Activated CD4-positive, alpha-beta T cell treated with anti-CD3 and anti-CD28 coated beads for 36 hours (primary cell): ENCODE measurements at regions of chrX and their contacts with region 1.

Region 1: DNA sequence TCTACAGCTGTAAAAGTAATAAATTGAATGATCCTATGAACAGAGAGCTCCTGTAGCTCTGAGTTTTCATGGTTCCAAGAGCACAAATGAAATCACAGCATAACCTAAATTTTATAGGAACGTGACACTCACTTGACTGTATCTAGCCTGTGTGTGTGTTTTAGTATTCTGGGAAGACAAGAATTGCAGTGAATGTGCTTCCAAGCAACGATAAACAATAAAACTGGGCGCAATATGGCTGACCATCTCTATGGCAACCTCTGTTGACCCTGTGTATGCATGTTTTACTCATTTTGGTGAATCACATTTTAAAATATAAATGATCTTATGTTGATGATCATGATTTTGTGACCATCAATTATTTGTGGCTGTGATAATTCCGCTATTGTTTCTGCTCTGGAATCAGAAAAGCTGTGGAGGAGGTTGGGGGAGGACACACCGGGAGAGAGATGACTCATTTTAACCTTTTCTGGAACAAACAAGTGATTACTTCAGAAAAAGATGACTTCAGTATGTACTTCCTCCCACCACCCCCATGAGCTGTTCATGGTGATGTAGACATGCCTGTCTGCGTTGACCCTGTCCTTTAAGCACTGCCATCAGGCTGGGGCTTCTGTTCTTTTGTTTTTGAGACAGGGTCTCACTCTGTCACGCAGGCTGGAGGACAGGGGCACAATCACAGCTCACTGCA is 31.8 kb downstream of the USP11 start:
- DNase-seq: peak; percentile 39
- ATAC-seq: peak; percentile 87
- H3K4me3 Mint-ChIP-seq: no peak overlapping the region
- H3K27ac Mint-ChIP-seq: peak overlapping the region; percentile 55
- H3K4me1 Mint-ChIP-seq: peaks cover 12% of the 10 kb centered on the region
- H3K27me3 Mint-ChIP-seq: no peaks in the 10 kb centered on the region

Region 2: DNA sequence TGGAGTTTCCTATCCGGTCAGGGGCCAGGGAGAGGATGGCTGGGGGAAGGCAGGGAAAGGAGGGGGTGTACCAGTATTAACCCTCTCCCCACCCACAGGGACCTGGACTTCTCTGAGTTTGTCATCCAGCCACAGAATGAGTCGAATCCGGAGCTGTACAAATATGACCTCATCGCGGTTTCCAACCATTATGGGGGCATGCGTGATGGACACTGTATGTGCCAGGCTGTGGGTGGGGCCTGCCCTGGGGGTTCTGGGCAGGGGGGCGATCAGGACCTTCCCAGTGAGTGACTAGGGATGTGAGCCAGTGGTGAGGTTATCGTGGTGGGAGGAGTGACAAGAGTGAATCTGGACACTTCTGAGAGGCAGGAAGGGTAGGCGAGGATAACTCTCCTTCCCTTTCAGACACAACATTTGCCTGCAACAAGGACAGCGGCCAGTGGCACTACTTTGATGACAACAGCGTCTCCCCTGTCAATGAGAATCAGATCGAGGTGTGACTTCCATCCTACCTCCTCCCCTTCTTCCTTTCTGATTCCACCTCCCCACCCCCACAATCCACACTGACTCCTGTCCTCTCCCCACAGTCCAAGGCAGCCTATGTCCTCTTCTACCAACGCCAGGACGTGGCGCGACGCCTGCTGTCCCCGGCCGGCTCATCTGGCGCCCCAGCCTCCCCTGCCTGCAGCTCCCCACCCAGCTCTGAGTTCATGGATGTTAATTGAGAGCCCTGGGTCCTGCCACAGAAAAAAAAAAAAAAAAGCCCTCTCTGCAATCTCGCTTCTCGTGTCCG is 17.2 kb before region 1 on chrX:
- CTCF ChIA-PET with region 1: no interaction called
- POLR2A ChIA-PET with region 1: no interaction called
- intact Hi-C with region 1: loop called in 1 of 2 experiments (anchors 1 kb)
- DNase-seq: peak; percentile 30
- ATAC-seq: peak; percentile 45
- H3K4me3 Mint-ChIP-seq: no peak overlapping the region
- H3K27ac Mint-ChIP-seq: no peak overlapping the region
- H3K4me1 Mint-ChIP-seq: peaks cover 19% of the 10 kb centered on the region
- H3K27me3 Mint-ChIP-seq: no peaks in the 10 kb centered on the region